ENCODE measurements at regions of chr1 and their contacts with region 1.

Region 1: DNA sequence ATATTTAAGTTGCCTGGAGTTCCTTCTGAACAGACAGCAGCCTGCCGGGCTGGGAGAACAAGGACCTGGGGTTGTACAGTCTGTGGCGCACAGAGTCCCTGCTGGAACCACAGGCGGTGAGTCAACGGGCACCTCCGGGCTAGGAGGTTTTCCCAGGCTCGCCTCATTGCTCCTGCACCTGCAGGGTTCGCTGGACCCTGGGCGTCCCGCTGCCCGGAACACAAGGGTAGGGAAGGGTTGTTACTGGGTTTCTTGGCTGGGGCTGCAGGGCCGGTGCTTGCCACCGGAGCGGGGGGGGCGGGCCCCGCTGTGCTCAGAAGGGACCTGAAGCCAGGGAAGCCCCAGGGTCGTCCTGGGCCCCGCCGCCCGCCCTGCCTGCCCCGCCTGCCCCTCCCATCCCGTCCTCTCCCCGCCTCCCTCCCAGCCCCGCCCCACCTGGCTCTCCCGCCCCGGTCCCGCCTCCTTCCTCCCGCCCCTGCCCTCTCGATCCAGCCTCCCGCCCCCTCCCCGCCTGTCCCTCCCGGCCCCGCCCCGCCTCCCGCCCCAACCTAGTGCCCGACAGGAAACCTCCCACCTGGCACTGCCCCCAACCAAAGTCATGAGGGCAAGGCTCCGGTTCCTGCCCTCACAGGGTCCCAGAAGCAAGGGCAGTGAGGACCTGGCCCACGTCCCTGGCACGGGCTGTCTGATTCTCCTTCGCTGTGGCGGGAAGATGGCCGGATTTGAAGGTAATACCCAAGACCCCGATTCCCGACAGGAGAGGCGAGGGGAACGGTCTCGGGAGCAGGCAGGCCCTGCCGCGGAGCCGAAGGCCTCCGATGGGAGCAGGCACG is 6.8 kb downstream of the JMJD4 start:
- DNase-seq: peak; percentile 43
- ATAC-seq: peak; percentile 51
- H3K4me3 ChIP-seq: peak overlapping the region; percentile 60
- H3K27ac ChIP-seq: peak overlapping the region; percentile 16; the same call in 1 of the 2 replicates
- H3K4me1 ChIP-seq: no peaks in the 10 kb centered on the region; the same call in 1 of the 2 replicates
- H3K27me3 ChIP-seq: no peaks in the 10 kb centered on the region
- CTCF ChIP-seq: no peak
- POLR2A ChIP-seq: no peak
- RAD21 ChIP-seq: no peak

Region 2: DNA sequence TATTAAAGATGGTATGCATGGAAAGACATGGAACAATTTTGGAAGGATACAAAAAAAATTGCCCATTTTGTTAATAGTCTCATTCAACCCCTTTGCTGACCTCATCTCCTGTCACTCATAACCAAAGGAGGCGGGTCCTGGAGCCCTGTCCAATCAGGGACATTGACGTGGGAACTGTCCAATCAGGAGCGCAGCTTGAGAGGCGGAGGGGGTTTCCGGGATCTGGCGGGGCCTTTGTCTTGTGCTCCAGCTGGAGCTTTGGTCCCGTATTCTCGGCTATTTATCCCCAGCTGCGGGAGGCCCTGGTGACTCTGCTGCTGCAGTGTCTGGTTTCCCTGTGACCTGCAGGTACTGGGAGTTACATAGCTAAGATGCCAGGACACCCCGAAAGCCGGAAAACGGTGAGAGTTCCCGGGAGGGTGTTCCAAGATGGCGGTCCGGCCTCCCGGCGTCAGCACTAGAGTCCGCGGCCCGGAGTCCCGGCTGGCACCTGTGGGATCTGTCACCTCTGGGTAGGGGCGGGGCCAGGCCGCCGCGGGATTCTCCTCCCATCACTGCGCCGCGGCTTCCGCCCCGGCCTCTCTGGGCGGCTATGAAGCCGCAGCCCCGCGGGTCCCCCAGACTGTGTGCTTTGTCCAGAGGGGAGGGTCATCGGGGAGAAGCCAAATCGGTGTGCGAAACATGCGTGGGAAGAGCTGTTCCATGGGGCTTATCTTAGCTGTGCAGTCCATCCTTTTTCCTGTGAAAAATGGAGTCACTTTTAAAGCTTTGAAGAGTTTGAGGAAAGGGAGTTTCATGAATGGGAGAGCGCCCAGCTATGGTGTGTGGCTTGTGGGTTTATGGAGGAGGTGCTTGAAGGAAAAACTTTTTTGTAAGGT is 164.7 kb before region 1 on chr1 and contains the start of gene ZNF678:
- CTCF ChIA-PET with region 1: no interaction called
- POLR2A ChIA-PET with region 1: no interaction called
- dilution Hi-C with region 1: no loop called
- in situ Hi-C with region 1: no loop called
- intact Hi-C with region 1: loop called (anchors 5 kb)
- DNase-seq: peak; percentile 94
- ATAC-seq: peak; percentile 97
- H3K4me3 ChIP-seq: peak within 1 kb of the TSS; percentile 87
- H3K27ac ChIP-seq: peak within 1 kb of the TSS; percentile 94
- H3K4me1 ChIP-seq: no peaks in the 10 kb centered on the region
- H3K27me3 ChIP-seq: peaks cover 12% of the 10 kb centered on the region; the same call in 1 of the 2 replicates
- CTCF ChIP-seq: no peak
- POLR2A ChIP-seq: peak; percentile 74
- RAD21 ChIP-seq: no peak
- total RNA-seq, gene ZNF678: 4.8 and 6.7 TPM in 2 replicates

Region 3: DNA sequence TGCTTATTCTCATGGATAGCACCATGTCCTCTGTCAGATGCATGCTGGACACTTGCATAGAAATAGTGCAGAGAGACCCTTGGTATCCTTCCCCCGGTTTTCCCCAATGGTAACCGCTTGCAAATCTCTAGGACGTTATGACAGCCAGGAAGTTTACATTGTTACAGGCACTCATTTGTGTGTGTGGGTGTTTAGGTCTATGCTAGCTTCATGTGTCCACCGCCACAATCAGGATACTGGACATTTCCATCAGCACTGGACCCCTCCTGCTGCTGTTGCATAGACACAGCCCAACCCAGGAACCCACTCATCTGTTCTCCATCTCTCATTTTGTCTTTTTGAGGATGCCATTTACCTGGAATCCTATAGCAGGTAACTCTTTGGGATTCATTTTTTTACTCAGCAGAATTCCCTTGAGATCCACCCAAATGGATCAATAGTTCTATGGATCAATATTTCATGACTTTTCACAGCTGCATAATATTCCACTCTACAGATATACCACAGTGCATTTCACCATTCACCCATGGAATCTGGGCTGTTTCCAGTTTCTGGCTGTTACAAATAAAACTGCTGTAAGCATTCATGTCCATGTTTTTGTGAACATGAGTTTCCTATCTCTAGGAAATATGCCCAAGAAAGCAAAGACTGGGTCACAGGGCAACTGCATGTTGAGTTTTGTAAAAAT is 226.0 kb after region 1 on chr1:
- CTCF ChIA-PET with region 1: no interaction called
- POLR2A ChIA-PET with region 1: no interaction called
- dilution Hi-C with region 1: no loop called
- in situ Hi-C with region 1: no loop called
- intact Hi-C with region 1: loop called (anchors 2 kb)
- DNase-seq: no peak
- ATAC-seq: no peak
- H3K4me3 ChIP-seq: no peak overlapping the region
- H3K27ac ChIP-seq: no peak overlapping the region
- H3K4me1 ChIP-seq: peaks cover 4% of the 10 kb centered on the region; the same call in 1 of the 2 replicates
- H3K27me3 ChIP-seq: no peaks in the 10 kb centered on the region; the same call in 1 of the 2 replicates
- CTCF ChIP-seq: no peak
- POLR2A ChIP-seq: no peak
- RAD21 ChIP-seq: no peak

Region 4: GRCh38 chr1:228021362-228021961 is 293.2 kb after region 1 on chr1:
- CTCF ChIA-PET with region 1: no interaction called
- POLR2A ChIA-PET with region 1: no interaction called
- dilution Hi-C with region 1: no loop called
- in situ Hi-C with region 1: no loop called
- intact Hi-C with region 1: no loop called
- DNase-seq: peak; percentile 11
- ATAC-seq: no peak
- H3K4me3 ChIP-seq: no peak overlapping the region
- H3K27ac ChIP-seq: no peak overlapping the region
- H3K4me1 ChIP-seq: no peaks in the 10 kb centered on the region; the same call in 1 of the 2 replicates
- H3K27me3 ChIP-seq: peaks cover 4% of the 10 kb centered on the region; the same call in 1 of the 2 replicates
- CTCF ChIP-seq: no peak
- POLR2A ChIP-seq: no peak
- RAD21 ChIP-seq: no peak